Posterior cingulate gyrus (tissue), 11 donors: ENCODE measurements at regions of chr4 and their contacts with region 1.

Region 1: GRCh38 chr4:25986807-25987206 is 72.8 kb downstream of the SMIM20 start:
- DNase-seq: peak in 2 of 10 donors; percentile 35 to 84

Region 2: GRCh38 chr4:25807102-25807728 is 179.6 kb before region 1 on chr4:
- intact Hi-C with region 1: no loop called
- DNase-seq: no peak

Region 3: GRCh38 chr4:25925486-25926201 is 61.2 kb before region 1 on chr4:
- intact Hi-C with region 1: loop called (anchors 5 kb)
- DNase-seq: peak in 9 of 10 donors; percentile 38 to 92 (median 52)

Region 4: GRCh38 chr4:26116092-26116491 is 129.3 kb after region 1 on chr4:
- intact Hi-C with region 1: no loop called
- DNase-seq: no peak

Region 5: DNA sequence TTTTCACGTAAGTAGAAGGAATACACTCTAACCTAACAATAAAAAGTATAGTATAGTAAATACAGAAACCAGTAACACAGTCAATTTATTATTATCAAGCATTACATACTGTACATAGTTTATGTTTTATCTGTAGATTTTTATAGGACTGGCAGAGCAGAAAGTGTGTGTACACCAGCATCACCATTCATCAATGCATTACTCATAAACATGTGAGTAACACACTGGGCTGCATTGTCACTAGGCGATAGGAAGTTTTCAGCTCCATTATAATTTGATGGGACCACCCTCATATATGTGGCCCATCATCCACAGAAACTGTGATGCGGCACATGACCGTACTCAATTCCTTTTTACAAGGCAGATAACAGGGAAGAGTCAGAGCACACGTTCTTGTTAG is 196.2 kb after region 1 on chr4:
- intact Hi-C with region 1: no loop called
- DNase-seq: no peak

Region 6: GRCh38 chr4:26713563-26714151 is 726.9 kb after region 1 on chr4:
- intact Hi-C with region 1: loop called (anchors 5 kb)
- DNase-seq: no peak